Activated B cell treated with CpG ODN at 0.5 μM for 24 hours (primary cell): ENCODE measurements at regions of chr17 and their contacts with region 1.

Region 1: GRCh38 chr17:1865252-1866037 is 35.6 kb downstream of the RPA1 start:
- DNase-seq: no peak
- ATAC-seq: peak; percentile 42
- H3K4me3 Mint-ChIP-seq: no peak overlapping the region
- H3K27ac Mint-ChIP-seq: no peak overlapping the region
- H3K4me1 Mint-ChIP-seq: no peaks in the 10 kb centered on the region
- H3K27me3 Mint-ChIP-seq: no peaks in the 10 kb centered on the region
- CTCF ChIP-seq: peak; percentile 63

Region 2: GRCh38 chr17:1561400-1562175 is 303.9 kb before region 1 on chr17:
- CTCF ChIA-PET with region 1: no interaction called
- POLR2A ChIA-PET with region 1: no interaction called
- intact Hi-C with region 1: loop called (anchors 10 kb)
- DNase-seq: peak; percentile 54
- ATAC-seq: peak; percentile 26
- H3K4me3 Mint-ChIP-seq: peak overlapping the region; percentile 86
- H3K27ac Mint-ChIP-seq: peak overlapping the region; percentile 71
- H3K4me1 Mint-ChIP-seq: peaks cover 52% of the 10 kb centered on the region
- H3K27me3 Mint-ChIP-seq: no peaks in the 10 kb centered on the region
- CTCF ChIP-seq: no peak

Region 3: DNA sequence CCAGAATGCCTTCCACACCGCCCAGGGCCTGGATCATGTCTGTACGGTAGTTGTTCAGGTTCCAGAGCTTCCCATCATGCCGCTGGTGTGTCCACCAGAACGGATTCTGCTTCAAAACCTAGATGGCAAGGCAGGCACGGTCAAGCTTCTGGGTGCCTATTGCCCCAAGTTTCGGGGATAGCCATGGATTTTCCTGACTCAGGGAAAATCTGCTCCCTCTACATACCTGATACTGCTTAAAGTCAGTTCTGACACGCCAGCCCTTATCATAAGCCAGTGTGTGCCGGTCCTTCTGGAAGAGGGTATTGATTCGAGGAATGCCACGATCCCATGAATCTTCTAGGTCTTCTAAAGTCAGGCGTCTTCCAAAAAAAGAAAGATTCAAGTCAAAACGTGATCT is 204.4 kb before region 1 on chr17:
- CTCF ChIA-PET with region 1: interaction called, 3 read pairs
- POLR2A ChIA-PET with region 1: interaction called, 11 read pairs
- intact Hi-C with region 1: no loop called
- DNase-seq: no peak
- ATAC-seq: no peak
- H3K4me3 Mint-ChIP-seq: no peak overlapping the region
- H3K27ac Mint-ChIP-seq: no peak overlapping the region
- H3K4me1 Mint-ChIP-seq: no peaks in the 10 kb centered on the region
- H3K27me3 Mint-ChIP-seq: no peaks in the 10 kb centered on the region
- CTCF ChIP-seq: no peak

Region 4: DNA sequence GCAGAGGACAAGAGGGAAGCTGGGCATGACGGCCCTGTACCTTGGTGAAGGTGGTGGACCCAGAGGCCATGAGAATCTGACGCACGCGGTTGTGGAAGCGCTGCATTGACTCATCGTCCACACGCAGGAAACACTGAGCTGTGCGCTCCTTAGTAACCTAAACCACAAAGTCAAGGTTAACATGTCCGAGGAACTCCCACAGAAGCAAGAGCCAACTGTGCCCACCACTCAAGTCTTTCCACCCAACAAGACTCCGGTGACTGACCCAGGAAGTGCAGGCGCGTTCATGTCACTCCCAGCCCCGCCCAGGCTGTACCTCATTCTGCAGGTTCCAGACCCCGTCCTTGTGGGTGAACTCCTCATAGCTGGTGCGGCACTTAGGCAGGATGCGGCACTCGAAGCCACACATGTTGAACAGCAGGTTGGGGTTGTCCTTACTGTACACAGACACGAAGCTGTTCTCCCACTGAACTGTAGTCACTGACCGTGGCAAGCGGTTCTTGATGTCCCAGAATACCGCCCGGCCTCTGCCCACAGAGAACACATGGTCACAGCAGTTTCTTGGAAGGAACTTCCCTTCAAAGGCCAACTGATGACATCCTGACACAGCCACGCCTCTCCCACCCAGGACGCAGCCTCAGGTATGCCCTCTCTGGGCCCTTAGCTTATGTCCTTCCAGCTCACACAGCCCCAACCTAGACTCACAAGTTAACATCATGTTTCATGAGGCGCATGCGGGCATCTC is 192.2 kb before region 1 on chr17:
- CTCF ChIA-PET with region 1: interaction called, 28 read pairs
- POLR2A ChIA-PET with region 1: no interaction called
- intact Hi-C with region 1: loop called (anchors 1 kb)
- DNase-seq: no peak
- ATAC-seq: no peak
- H3K4me3 Mint-ChIP-seq: no peak overlapping the region
- H3K27ac Mint-ChIP-seq: no peak overlapping the region
- H3K4me1 Mint-ChIP-seq: no peaks in the 10 kb centered on the region
- H3K27me3 Mint-ChIP-seq: no peaks in the 10 kb centered on the region
- CTCF ChIP-seq: no peak

Region 5: DNA sequence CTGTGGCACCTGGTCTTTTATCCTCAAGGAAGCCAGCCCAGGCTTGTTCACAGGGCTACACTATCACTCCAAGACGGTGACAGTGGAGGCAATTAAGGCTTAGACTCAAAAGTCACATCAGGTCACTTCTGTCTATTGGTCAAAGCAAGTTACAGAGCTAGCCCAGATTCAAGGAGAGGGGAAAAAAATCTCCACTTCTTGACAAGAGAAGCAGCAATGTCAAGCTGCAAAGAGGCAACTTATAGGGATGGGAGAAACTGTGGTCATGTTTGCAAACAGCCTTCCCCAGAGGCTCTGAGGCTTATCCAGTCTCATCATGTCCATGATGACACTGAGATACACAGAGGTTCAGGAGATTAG is 72.0 kb before region 1 on chr17:
- CTCF ChIA-PET with region 1: interaction called, 4 read pairs
- POLR2A ChIA-PET with region 1: no interaction called
- intact Hi-C with region 1: loop called (anchors 5 kb)
- DNase-seq: no peak
- ATAC-seq: no peak
- H3K4me3 Mint-ChIP-seq: no peak overlapping the region
- H3K27ac Mint-ChIP-seq: no peak overlapping the region
- H3K4me1 Mint-ChIP-seq: peaks cover 2% of the 10 kb centered on the region
- H3K27me3 Mint-ChIP-seq: no peaks in the 10 kb centered on the region
- CTCF ChIP-seq: no peak

Region 6: GRCh38 chr17:1908699-1909309 is 43.4 kb after region 1 on chr17:
- CTCF ChIA-PET with region 1: no interaction called
- POLR2A ChIA-PET with region 1: no interaction called
- intact Hi-C with region 1: no loop called
- DNase-seq: no peak
- ATAC-seq: peak; percentile 71
- H3K4me3 Mint-ChIP-seq: peak overlapping the region; percentile 67
- H3K27ac Mint-ChIP-seq: no peak overlapping the region
- H3K4me1 Mint-ChIP-seq: peaks cover 30% of the 10 kb centered on the region
- H3K27me3 Mint-ChIP-seq: peaks cover 51% of the 10 kb centered on the region
- CTCF ChIP-seq: no peak